ENCODE measurements at regions of chr16 and their contacts with region 1.

Region 1: DNA sequence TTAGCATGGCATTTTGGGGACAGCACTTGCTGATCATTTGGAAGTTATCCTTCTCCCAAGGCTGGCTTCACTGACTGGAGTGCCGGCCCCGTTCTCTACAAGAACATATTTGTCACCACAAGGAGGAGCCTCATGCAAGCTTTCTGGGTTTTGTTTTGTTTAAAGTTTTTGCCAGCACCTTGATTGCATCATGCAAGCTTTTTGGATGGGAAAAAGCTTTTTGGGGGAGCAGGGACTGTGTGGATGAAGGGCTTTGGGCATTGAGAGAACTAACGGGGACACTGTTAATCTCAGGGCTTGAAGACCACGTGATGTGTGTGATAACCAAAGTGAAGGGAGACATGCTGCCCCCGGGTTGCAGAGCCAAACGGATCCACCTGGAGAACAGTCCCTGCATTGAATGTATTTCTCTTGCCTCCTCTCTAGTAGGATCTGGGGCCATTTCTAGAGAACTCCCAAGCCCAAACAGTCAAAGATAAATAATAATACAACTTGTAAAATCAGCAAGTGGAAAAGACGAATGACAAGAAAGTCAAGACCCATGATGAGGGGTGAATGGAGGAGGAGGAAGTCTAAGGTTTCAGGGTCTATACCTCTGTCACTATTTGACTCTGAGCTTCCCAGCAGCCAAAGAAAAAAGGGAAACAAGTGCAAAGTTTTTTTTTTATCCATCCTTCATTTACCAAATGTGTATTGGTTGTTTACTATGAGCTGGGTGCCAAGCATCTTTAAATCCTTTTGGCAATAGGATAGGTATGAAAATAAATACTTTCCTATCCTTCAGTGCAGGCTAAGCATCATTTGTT is 17.2 kb downstream of the TMEM114 start:
- DNase-seq: peak; percentile 31 to 47 (median 36)
- ATAC-seq: peak; percentile 82
- H3K4me3 ChIP-seq: no peak overlapping the region
- H3K27ac ChIP-seq: no peak overlapping the region
- H3K4me1 ChIP-seq: peaks cover 0 to 8% of the 10 kb centered on the region in 2 experiments; a peak in 1 of 5 replicates
- H3K27me3 ChIP-seq: peaks cover 12 to 41% of the 10 kb centered on the region in 2 experiments
- CTCF ChIP-seq: peak; percentile 66 to 78 (median 77)
- EP300 ChIP-seq: 0 out of 2 replicates have a peak, but pooled peaks have one; percentile 10
- POLR2A ChIP-seq: no peak
- RAD21 ChIP-seq: peak; percentile 40 to 88

Region 2: DNA sequence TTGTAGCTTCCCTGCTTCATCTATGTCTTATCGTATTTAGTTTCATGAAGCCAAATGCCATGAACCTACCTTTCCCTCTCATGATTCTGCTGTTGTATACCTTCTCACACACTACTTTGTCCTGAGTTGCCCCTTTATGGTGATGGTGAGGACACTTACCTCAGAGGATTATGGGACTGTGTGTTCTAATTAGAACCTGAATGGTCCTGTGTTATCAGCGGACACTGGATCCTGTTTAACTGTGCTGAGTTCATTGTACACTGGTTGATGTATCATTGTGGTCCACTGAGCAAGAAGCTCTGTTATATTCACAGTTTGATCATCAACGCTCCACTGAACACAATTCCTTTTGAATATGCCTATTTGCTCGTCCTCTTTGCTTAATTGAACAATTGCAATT is 897.5 kb before region 1 on chr16:
- CTCF ChIA-PET with region 1: no interaction called
- POLR2A ChIA-PET with region 1: no interaction called
- in situ Hi-C with region 1: no loop called
- intact Hi-C with region 1: no loop called
- DNase-seq: no peak
- ATAC-seq: no peak
- H3K4me3 ChIP-seq: no peak overlapping the region
- H3K27ac ChIP-seq: no peak overlapping the region
- H3K4me1 ChIP-seq: no peaks in the 10 kb centered on the region
- H3K27me3 ChIP-seq: peaks cover 2 to 6% of the 10 kb centered on the region in 2 experiments; a peak in 2 of 5 replicates
- CTCF ChIP-seq: no peak
- EP300 ChIP-seq: no peak
- POLR2A ChIP-seq: no peak
- RAD21 ChIP-seq: no peak

Region 3: GRCh38 chr16:8634991-8635736 is 62.0 kb after region 1 on chr16:
- CTCF ChIA-PET with region 1: interaction called, 28 read pairs
- POLR2A ChIA-PET with region 1: interaction called, 3 read pairs
- in situ Hi-C with region 1: no loop called
- intact Hi-C with region 1: loop called (anchors 1 kb)
- DNase-seq: peak; percentile 59 to 69 (median 63)
- ATAC-seq: peak; percentile 96
- H3K4me3 ChIP-seq: no peak overlapping the region
- H3K27ac ChIP-seq: no peak overlapping the region
- H3K4me1 ChIP-seq: peaks cover 3% of the 10 kb centered on the region in 2 experiments; a peak in 4 of 5 replicates
- H3K27me3 ChIP-seq: no peaks in the 10 kb centered on the region
- CTCF ChIP-seq: peak; percentile 96 to 100 (median 100)
- EP300 ChIP-seq: no peak
- POLR2A ChIP-seq: no peak
- RAD21 ChIP-seq: peak; percentile 44 to 75